Common myeloid progenitor, CD34-positive (primary cell): ENCODE measurements at regions of chr1 and their contacts with region 1.

Region 1: DNA sequence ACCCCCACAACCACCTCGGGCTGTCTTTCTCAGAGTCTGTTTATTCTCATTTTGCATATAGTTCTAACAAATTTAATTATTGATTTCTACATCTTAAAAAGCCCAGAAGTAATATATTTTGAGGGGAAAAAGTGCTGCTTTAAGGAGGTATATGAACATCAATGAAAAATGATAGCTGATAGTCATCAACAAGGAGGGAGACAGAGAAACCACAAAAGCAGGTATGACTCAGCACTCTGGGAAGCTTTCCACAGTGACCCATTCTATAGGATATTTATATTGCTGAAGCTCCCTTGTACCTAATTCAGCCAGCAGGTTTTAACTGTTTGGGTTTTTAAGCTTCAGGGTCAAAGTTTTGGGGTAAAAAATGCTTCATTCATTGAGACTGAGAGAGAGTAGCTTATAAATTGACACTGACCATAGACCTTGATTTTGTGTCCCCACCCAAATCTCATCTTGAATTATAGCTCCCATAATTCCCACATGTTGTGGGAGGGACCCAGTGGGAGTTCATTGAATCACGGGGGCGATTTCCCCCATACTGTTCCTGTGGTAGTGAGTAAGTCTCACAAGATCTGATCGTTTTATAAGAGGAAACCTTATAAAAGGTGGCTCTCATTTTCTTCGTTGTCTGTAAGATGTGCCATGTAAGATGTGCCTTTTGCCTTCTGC is 27.4 kb downstream of the VANGL1 start:
- DNase-seq: peak in 2 of 3 donors; percentile 58 to 65
- H3K4me3 ChIP-seq: peak overlapping the region in 1 of 7 experiments; percentile 16
- H3K27ac ChIP-seq: peak overlapping the region in 1 of 2 experiments; percentile 45
- H3K4me1 ChIP-seq: peaks cover 0 to 37% (median 25%) of the 10 kb centered on the region in 4 experiments
- H3K27me3 ChIP-seq: no peaks in the 10 kb centered on the region

Region 2: DNA sequence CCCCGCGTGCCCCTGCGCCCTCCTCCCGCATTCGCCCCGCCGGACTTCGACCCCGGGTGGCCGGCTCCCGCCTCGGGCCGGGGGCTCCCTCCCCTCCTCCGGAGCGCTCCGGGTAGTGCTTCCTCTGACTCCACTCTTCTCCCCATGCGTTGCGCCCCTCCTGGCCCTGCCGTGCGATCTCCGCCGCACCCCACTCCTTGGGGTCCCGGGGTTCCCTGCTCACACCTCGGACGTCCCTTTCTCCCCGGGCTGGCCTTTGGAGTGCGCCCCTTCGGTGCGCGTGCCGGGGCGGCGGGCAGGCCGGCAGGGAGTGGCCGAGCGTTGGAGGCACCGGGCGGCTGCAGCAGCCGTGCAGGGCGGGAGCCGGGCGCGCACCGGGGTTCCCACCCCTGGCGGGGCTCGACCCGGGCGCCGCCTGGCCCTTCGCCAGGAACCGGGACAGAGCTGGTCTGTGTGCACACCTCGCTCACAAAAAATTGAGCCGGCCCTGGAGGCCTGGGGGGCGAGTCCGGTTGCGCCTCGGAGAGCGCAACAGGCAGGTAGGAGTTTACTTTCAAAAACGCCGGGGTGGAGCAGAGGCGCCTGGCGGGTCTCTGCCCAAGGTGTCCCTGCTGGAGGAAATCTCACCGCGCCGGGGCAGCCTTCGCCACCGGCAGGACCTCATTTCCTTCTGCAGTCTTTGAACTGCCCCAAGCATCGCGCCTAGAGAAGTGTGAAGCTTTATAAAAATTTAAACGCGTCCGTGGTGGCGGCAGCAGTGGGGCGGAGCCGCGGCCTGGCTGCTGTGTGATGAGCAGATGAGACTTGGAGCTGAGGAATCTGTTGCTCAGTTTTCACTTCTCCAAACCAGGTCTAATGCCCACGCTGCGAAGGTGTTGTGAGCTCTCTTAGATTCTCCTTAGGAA is 26.7 kb before region 1 on chr1:
- CTCF ChIA-PET with region 1: interaction called, 28 read pairs
- POLR2A ChIA-PET with region 1: interaction called, 3 read pairs
- DNase-seq: peak; percentile 54 to 80 (median 69)
- H3K4me3 ChIP-seq: peak overlapping the region; percentile 72 to 90 (median 85)
- H3K27ac ChIP-seq: peak overlapping the region; percentile 36 to 67
- H3K4me1 ChIP-seq: peaks cover 0 to 25% (median 20%) of the 10 kb centered on the region in 4 experiments
- H3K27me3 ChIP-seq: no peaks in the 10 kb centered on the region

Region 3: DNA sequence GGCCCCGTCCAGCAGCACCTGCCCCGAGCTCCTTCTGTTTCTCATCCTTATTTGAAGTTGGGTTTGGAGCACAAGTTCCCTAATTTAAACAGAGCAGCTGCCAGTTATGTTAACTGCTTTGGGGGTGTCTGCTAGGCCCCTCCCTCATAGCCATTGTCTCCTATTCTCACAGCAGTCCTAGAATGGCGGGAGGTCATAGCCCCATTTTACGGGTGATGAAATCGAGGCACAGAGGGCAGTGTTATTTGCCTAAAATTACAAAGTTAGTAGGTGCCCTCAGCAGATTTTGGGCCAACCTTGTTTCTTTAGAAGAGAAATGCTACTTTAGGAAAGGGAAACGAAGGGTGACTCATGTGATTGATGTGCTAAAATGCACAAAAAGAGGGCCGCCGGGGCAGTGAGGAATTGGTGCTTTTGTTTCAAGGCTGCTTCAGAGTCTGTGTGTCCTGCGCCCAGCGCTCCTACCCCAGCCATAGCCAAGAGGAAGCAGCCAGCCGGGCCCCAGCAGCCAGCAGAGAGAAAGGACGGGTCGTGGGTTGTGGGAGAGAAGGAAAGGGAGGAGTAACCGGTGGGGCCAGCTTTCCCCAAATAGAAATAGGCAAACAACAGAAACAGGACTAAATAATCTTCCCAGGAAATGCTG is 14.4 kb before region 1 on chr1:
- CTCF ChIA-PET with region 1: interaction called, 16 read pairs
- POLR2A ChIA-PET with region 1: no interaction called
- DNase-seq: peak; percentile 46 to 90 (median 84)
- H3K4me3 ChIP-seq: peak overlapping the region in 5 of 7 experiments; percentile 15 to 53 (median 43)
- H3K27ac ChIP-seq: peak overlapping the region; percentile 61 to 78
- H3K4me1 ChIP-seq: peaks cover 3 to 47% (median 32%) of the 10 kb centered on the region in 4 experiments
- H3K27me3 ChIP-seq: no peaks in the 10 kb centered on the region